IMR-90 (cell line): ENCODE measurements at regions of chr2 and their contacts with region 1.

Region 1: DNA sequence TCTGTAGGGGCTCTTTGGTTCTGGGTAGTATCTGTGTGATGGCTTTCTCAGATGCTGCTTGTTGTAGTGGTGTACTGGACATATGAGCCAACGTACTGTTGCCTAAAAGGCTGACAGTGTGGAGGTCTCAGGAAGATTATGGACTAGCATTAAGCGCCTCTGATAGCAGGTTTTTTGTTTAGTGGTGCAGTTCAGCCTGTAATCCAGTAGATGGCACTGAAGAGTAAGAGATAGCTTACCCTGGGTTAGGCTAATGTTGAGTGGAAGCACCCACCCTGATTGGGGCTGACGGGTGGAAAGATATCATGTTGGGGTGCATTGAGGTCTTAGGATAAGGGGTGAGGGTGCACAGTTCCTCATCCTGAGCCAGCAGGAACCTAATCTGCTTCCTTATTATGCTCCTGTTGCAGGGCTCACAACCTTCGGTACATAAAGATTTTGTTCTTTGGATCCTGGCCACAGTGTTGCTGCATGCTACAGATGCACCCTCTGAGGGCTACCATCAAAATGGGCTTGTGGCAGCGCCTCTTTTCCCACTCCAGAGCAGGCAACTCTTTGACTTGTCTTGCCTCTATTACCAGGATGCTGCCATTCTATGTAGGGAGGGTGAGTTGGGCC is 79.6 kb downstream of the MSTN start:
- DNase-seq: no peak
- ATAC-seq: no peak
- H3K4me3 ChIP-seq: no peak overlapping the region
- H3K27ac ChIP-seq: no peak overlapping the region
- H3K4me1 ChIP-seq: no peaks in the 10 kb centered on the region
- H3K27me3 ChIP-seq: no peaks in the 10 kb centered on the region
- CTCF ChIP-seq: peak; percentile 23; the same call in 1 of the 2 replicates
- POLR2A ChIP-seq: no peak
- RAD21 ChIP-seq: peak; percentile 33; the same call in 1 of the 2 replicates

Region 2: DNA sequence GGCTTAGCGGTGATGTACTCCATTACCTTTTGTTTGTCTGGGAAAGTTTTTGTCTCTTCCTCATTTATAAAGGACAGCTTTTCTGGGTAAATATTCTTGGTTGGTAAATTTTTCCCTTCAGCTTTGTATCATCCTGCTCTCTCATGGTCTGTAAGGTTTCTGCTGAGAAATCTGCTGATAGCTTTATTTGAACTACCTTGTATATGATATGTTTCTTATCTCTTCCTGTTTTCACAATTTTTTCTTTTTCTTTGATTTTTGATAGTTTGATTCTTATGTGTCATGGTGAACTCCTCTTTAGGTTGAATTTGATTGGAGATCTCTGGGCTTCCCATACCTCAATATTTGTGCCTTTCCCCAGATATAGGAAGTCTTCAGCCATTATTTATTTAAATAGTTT is 35.0 kb after region 1 on chr2:
- CTCF ChIA-PET with region 1: no interaction called
- POLR2A ChIA-PET with region 1: no interaction called
- dilution Hi-C with region 1: no loop called
- in situ Hi-C with region 1: no loop called
- intact Hi-C with region 1: loop called (anchors 5 kb)
- DNase-seq: no peak
- ATAC-seq: no peak
- H3K4me3 ChIP-seq: no peak overlapping the region
- H3K27ac ChIP-seq: no peak overlapping the region
- H3K4me1 ChIP-seq: no peaks in the 10 kb centered on the region
- H3K27me3 ChIP-seq: peaks cover 3% of the 10 kb centered on the region
- CTCF ChIP-seq: no peak
- POLR2A ChIP-seq: no peak
- RAD21 ChIP-seq: no peak

Region 3: GRCh38 chr2:190277234-190278112 is 294.6 kb after region 1 on chr2:
- CTCF ChIA-PET with region 1: no interaction called
- POLR2A ChIA-PET with region 1: no interaction called
- dilution Hi-C with region 1: no loop called
- in situ Hi-C with region 1: no loop called
- intact Hi-C with region 1: no loop called
- DNase-seq: peak; percentile 51
- ATAC-seq: peak; percentile 29; the same call in 1 of the 2 replicates
- H3K4me3 ChIP-seq: no peak overlapping the region
- H3K27ac ChIP-seq: no peak overlapping the region
- H3K4me1 ChIP-seq: no peaks in the 10 kb centered on the region
- H3K27me3 ChIP-seq: no peaks in the 10 kb centered on the region; the same call in 1 of the 2 replicates
- CTCF ChIP-seq: peak; percentile 67
- POLR2A ChIP-seq: no peak
- RAD21 ChIP-seq: peak; percentile 64